ENCODE measurements at regions of chr1 and their contacts with region 1.

Region 1: DNA sequence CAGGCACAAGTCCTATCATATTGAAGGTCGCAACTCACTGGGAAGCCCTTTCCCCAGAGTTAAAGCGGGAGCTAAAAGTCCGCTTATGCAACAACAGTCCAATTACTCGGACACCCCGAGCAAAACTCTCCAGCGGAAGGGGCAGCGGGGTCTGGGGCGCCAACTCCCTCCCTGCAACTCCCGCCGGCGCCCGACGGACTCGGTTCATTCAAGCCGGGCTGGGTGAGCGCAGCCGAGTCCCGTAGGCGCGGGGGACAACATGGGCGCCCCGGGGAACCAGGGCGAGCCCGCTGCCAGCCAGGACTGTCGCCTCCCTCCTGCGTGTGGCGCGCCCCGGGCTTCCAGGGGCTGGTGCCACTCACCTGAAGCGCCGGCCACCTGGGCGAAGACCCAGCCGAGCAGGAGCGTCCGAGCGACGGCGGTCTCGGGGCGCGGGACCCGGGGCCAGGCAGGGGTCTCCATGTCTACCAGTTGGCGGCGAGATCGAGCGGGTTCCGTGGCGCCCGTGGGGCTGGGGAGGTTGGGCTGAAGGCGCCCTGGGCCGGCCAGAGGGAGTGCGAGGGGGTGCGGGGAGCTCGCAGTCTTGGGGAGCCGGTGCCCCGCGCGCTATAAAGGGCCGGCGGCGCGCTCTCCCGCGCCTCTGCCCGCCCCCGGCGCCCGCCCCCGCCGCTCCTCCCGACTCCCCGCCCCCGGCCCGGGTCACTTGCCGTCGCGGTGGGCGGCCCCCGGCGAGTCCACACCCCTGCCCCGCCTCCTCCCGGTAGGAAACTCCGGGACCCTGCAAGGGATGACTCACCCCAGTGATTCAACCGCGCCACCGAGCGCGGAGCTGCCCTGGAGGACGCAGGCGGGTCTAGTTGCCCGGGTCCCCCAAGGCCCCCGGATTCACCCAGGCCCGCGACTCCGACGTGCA is at the start of gene F3:
- DNase-seq: peak; percentile 43 to 96 (median 72)

Region 2: DNA sequence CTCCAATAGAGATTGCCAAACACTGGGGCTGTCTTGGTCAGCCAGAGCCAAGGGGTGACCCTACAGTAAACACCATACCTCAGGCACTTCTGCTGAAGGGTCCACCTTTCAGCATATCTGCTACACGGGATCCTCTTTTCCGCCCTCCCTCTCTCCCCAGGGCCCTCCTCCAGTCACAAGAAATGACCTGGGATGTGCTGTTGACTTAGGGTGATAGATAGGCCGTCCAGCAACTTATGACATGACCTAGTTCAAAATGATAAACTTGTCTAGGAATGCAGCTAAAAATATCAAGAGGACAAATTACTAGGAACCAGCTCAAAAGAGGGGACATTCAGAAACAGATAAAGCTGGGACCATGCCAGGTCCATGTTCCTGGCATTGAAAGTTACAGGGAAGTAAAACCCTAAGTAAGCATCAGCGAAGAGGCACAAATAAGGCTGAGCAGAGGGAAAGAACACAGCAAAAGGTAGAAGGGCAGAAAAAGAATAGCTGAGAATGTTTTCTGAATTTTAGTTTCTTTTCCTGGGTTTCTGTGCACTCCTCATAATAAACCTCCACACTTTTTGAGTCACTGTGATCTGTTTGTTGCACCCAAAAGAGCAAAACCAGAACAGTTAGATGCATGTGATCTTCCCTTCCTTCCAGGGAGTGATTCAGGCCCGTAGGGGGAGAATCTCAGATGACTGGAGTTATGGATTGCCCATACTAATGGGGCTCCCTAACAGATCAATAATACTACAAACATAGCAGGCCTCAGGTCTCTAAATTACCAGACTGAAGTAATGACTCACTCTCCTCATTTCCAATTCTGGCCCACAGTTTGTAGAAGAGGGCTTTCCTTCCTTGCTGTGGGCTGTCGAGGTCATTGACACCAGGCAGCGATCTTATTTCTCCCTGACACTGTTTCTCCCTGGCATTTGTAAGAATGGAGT is 49.0 kb after region 1 on chr1:
- intact Hi-C with region 1: loop called (anchors 2 kb)
- DNase-seq: no peak

Region 3: GRCh38 chr1:94614996-94615395 is 73.6 kb after region 1 on chr1:
- intact Hi-C with region 1: no loop called
- DNase-seq: no peak

Region 4: GRCh38 chr1:94648225-94649007 is 107.0 kb after region 1 on chr1:
- intact Hi-C with region 1: no loop called
- DNase-seq: no peak

Region 5: GRCh38 chr1:94783342-94784264 is 242.2 kb after region 1 on chr1:
- intact Hi-C with region 1: no loop called
- DNase-seq: peak in 6 of 10 donors; percentile 23 to 88 (median 43)

Measured in posterior cingulate gyrus (tissue), 11 donors.